K562 (cell line): ENCODE measurements at regions of chr12 and their contacts with region 1.

Region 1: GRCh38 chr12:23810329-23810902 is 139.1 kb downstream of the SOX5 start:
- DNase-seq: peak; percentile 9 to 34 (median 19)
- ATAC-seq: peak; percentile 50
- H3K4me3 ChIP-seq: no peak overlapping the region
- H3K27ac ChIP-seq: peak overlapping the region; percentile 29; the same call in 1 of the 3 replicates
- H3K4me1 ChIP-seq: peaks cover 0 to 13% of the 10 kb centered on the region in 2 experiments; a peak in 2 of 5 replicates
- H3K27me3 ChIP-seq: no peaks in the 10 kb centered on the region
- CTCF ChIP-seq: no peak
- EP300 ChIP-seq: peak; percentile 31; the same call in 1 of the 2 replicates
- POLR2A ChIP-seq: no peak
- RAD21 ChIP-seq: no peak

Region 2: DNA sequence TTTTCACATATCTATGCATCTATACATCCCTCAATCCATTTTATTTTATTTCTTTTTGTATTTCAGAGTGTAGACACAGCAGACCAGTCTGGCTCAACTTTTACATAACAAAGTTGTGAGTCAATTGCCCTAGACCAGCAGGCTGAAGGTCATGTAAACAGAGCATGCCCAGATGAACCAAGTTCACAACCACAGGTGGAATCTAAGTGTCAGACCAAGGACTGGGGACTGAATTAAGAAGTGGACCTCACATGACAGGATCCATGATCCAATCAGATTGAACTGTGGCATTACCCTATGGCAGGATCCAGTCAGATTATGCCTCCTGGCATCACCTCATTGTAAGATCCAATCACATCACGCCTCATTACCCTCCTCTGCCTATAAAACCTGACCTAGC is 316.7 kb before region 1 on chr12:
- CTCF ChIA-PET with region 1: no interaction called
- POLR2A ChIA-PET with region 1: no interaction called
- in situ Hi-C with region 1: no loop called
- intact Hi-C with region 1: no loop called
- DNase-seq: no peak
- ATAC-seq: no peak
- H3K4me3 ChIP-seq: no peak overlapping the region
- H3K27ac ChIP-seq: no peak overlapping the region
- H3K4me1 ChIP-seq: no peaks in the 10 kb centered on the region
- H3K27me3 ChIP-seq: no peaks in the 10 kb centered on the region
- CTCF ChIP-seq: no peak
- EP300 ChIP-seq: no peak
- POLR2A ChIP-seq: no peak
- RAD21 ChIP-seq: no peak

Region 3: GRCh38 chr12:23949348-23950209 is 139.2 kb after region 1 on chr12 and contains the start of gene SOX5:
- CTCF ChIA-PET with region 1: no interaction called
- POLR2A ChIA-PET with region 1: no interaction called
- in situ Hi-C with region 1: no loop called
- intact Hi-C with region 1: loop called (anchors 10 kb)
- DNase-seq: peak; percentile 19 to 72 (median 39)
- ATAC-seq: peak; percentile 97
- H3K4me3 ChIP-seq: peak within 1 kb of the TSS; percentile 35
- H3K27ac ChIP-seq: no peak within 1 kb of the TSS
- H3K4me1 ChIP-seq: peaks cover 0 to 5% of the 10 kb centered on the region in 2 experiments; a peak in 1 of 5 replicates
- H3K27me3 ChIP-seq: no peaks in the 10 kb centered on the region
- CTCF ChIP-seq: no peak
- EP300 ChIP-seq: no peak
- POLR2A ChIP-seq: no peak
- RAD21 ChIP-seq: no peak
- polyA plus RNA-seq, gene SOX5: 10.9 to 12.3 TPM